ENCODE measurements at regions of chr10 and their contacts with region 1.

Region 1: GRCh38 chr10:58952747-58953466 is 223.5 kb upstream of the PHYHIPL start:
- DNase-seq: peak; percentile 59
- H3K4me3 Mint-ChIP-seq: no peak overlapping the region
- H3K27ac Mint-ChIP-seq: no peak overlapping the region
- H3K4me1 Mint-ChIP-seq: peaks cover 6% of the 10 kb centered on the region
- H3K27me3 Mint-ChIP-seq: peaks cover 9% of the 10 kb centered on the region
- CTCF ChIP-seq: peak; percentile 70

Region 2: DNA sequence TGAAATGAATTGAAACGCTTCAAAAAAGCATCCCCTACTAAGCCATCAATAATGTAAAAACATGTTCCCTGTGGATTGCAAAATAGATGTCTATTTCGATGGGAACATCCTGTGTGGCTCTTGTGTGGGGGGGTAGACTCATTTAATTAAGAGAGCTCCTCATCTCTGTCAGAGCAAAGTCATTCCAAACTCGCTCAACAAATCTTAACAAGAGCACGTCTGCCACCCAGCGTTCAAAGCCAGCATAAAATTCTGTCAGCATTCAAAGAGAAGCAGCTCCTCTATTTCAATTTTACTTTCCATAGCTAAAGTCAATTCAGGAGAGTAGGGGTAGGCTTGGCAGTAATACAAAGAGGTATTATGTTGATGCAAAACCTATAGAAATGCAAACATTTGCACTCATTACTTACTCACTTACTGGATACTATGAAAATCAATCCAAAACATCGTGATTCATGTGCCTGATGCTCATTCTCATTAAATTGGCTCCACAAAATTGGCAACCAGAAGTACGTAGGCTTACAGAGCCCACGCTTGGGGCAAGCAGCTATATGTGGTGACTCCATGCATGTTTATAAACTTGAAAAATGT is 800.1 kb before region 1 on chr10:
- CTCF ChIA-PET with region 1: no interaction called
- POLR2A ChIA-PET with region 1: no interaction called
- intact Hi-C with region 1: no loop called
- DNase-seq: peak; percentile 80
- H3K4me3 Mint-ChIP-seq: no peak overlapping the region
- H3K27ac Mint-ChIP-seq: no peak overlapping the region
- H3K4me1 Mint-ChIP-seq: peaks cover 16% of the 10 kb centered on the region
- H3K27me3 Mint-ChIP-seq: no peaks in the 10 kb centered on the region
- CTCF ChIP-seq: peak; percentile 52

Region 3: DNA sequence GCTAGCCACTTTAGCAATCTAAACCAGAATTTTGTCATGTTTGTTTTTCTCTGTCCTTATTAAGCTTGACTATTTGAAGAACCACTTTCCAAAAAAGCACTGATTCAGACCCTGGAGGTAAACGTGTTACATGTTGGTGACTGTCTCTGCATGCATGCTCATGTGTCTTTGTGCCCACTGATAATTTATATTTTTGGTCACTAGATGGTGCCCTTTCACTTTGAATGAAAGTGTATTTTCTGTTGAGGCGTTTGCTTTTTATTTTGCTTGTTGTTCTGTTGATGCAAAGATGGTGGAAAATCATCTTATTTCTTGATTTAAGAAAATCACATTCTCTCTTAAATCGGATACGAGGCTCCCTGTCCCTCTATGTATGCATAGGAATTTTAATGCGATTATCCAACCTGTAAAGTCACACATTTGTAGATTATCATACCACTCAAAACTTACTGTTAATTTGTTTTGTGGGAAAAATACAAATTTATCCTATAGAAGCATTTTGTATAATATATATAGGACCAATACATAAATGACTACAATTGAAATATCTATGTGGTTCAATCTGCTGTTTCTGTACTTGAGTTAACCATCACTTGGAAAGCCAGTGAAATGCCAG is 170.9 kb before region 1 on chr10:
- CTCF ChIA-PET with region 1: interaction called, 12 read pairs
- POLR2A ChIA-PET with region 1: no interaction called
- intact Hi-C with region 1: loop called (anchors 2 kb)
- DNase-seq: peak; percentile 59
- H3K4me3 Mint-ChIP-seq: no peak overlapping the region
- H3K27ac Mint-ChIP-seq: no peak overlapping the region
- H3K4me1 Mint-ChIP-seq: peaks cover 22% of the 10 kb centered on the region
- H3K27me3 Mint-ChIP-seq: no peaks in the 10 kb centered on the region
- CTCF ChIP-seq: peak; percentile 52

Region 4: DNA sequence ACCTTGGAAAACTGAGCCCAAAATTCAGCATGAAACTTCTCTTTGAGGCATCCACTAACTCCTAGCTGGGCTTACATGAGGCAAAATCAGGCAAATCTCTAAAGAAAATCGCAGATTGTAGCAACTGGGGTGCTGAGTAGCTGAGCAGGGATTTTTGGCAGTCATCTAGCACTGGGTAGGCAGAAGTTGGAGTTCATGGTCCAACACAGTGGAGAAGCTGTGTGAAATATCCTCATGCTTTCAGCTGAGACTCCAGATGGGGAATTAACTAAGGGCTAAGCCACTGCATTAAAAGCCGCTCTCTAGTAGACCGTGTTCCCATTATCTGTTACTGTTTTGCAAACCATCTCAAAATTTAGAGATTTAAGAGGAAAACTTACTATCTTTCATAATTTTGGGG is 16.5 kb before region 1 on chr10:
- CTCF ChIA-PET with region 1: interaction called, 21 read pairs
- POLR2A ChIA-PET with region 1: no interaction called
- intact Hi-C with region 1: no loop called
- DNase-seq: no peak
- H3K4me3 Mint-ChIP-seq: no peak overlapping the region
- H3K27ac Mint-ChIP-seq: no peak overlapping the region
- H3K4me1 Mint-ChIP-seq: no peaks in the 10 kb centered on the region
- H3K27me3 Mint-ChIP-seq: no peaks in the 10 kb centered on the region
- CTCF ChIP-seq: no peak

Region 5: DNA sequence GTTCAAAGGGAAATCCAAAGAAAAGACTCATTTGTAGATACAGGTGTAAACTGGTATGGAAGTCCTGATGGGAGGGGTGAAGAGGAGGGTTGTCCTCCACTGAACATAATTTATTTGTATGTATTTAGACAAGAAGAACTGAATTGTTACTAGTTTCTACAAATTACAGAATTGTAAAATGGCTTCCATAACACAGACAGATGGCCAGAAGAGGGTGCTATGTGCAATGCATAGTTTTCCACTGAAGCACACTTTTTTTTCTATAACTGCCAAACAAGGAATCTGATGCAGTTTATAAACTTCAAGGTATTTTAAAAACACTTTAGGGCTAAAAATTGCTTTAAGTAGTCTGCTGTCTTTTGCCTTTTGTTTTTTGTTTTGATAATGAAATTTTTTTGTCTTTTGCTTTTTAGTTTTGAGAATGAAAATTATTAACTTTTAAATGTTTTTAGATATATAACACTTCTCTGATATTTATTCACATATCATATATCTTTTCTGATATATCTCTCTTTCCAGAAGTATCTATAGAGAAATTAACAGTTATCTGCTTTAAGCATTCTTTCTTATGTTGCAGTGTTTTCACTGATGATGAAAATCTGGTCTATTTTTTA is 282.0 kb after region 1 on chr10:
- CTCF ChIA-PET with region 1: interaction called, 12 read pairs
- POLR2A ChIA-PET with region 1: no interaction called
- intact Hi-C with region 1: loop called (anchors 1 kb)
- DNase-seq: peak; percentile 39
- H3K4me3 Mint-ChIP-seq: no peak overlapping the region
- H3K27ac Mint-ChIP-seq: no peak overlapping the region
- H3K4me1 Mint-ChIP-seq: no peaks in the 10 kb centered on the region
- H3K27me3 Mint-ChIP-seq: peaks cover 74% of the 10 kb centered on the region
- CTCF ChIP-seq: peak; percentile 42

Region 6: DNA sequence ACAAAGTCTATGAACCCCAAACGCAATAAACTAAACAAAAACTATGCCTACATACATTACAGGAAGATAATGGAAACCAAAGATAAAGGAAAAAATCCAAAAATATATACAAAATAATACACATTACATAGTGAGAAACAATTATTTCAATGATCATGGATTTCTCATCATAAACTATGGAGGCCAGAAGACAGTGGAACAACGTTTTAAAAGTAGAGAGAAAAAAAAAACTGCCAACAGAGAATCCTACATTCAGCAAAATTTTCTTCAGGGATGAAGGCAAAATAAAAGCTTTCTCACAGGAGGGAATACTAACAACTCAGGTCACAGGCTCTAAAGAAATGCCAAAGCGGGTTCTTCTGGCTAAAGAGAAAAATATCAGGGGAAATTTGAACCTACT is 452.3 kb after region 1 on chr10:
- CTCF ChIA-PET with region 1: no interaction called
- POLR2A ChIA-PET with region 1: no interaction called
- intact Hi-C with region 1: no loop called
- DNase-seq: no peak
- H3K4me3 Mint-ChIP-seq: no peak overlapping the region
- H3K27ac Mint-ChIP-seq: no peak overlapping the region
- H3K4me1 Mint-ChIP-seq: no peaks in the 10 kb centered on the region
- H3K27me3 Mint-ChIP-seq: no peaks in the 10 kb centered on the region
- CTCF ChIP-seq: no peak

Region 7: DNA sequence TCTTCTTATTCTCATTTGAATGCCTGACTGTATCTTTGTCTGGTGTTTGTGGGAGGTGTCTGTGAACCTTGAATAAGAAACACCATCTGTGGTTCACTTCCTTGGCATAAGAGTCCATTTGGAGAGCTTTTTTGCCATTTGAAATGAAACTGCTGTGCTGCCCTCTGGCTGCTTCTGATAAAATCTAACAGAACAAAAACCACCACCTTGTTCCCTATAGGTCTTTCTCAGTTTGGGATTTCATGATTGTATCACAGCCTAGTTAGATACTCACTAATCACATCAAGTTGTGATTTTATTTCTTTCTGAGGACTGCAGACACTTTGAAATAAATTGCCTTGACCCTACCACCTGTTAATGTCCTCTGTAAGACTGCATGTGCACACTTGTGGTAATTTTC is 512.2 kb after region 1 on chr10:
- CTCF ChIA-PET with region 1: interaction called, 13 read pairs
- POLR2A ChIA-PET with region 1: no interaction called
- intact Hi-C with region 1: no loop called
- DNase-seq: peak; percentile 36
- H3K4me3 Mint-ChIP-seq: no peak overlapping the region
- H3K27ac Mint-ChIP-seq: no peak overlapping the region
- H3K4me1 Mint-ChIP-seq: no peaks in the 10 kb centered on the region
- H3K27me3 Mint-ChIP-seq: peaks cover 28% of the 10 kb centered on the region
- CTCF ChIP-seq: no peak